Left cardiac atrium (tissue), 4 donors: ENCODE measurements at regions of chr9 and their contacts with region 1.

Region 1: GRCh38 chr9:72790989-72791388 is 161.9 kb downstream of the ALDH1A1 start:
- DNase-seq: no peak
- ATAC-seq: no peak

Region 2: DNA sequence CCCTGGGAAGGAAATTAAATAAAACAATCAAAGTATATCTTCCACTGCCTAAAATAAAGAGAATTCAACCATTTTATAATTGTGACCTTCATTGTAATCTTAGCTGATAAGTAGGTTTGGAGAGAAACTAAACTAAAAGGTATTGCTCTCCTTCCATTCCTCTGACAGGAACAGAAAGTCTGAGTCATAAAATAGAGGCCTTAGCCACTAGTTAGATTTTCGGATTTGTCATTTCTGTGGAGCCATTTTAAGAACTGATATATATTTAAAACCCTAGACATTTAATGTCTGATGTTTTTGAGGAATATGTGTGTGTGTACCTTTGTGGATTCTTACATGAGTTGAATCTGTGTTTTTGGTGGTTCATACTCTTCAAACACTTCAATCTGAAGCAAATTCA is 281.4 kb before region 1 on chr9:
- intact Hi-C with region 1: no loop called
- DNase-seq: no peak
- ATAC-seq: peak in 1 of 2 donors; percentile 35

Region 3: GRCh38 chr9:72817413-72817812 is 26.4 kb after region 1 on chr9:
- intact Hi-C with region 1: loop called in 1 of 2 experiments (anchors 2 kb)
- DNase-seq: no peak
- ATAC-seq: no peak

Region 4: DNA sequence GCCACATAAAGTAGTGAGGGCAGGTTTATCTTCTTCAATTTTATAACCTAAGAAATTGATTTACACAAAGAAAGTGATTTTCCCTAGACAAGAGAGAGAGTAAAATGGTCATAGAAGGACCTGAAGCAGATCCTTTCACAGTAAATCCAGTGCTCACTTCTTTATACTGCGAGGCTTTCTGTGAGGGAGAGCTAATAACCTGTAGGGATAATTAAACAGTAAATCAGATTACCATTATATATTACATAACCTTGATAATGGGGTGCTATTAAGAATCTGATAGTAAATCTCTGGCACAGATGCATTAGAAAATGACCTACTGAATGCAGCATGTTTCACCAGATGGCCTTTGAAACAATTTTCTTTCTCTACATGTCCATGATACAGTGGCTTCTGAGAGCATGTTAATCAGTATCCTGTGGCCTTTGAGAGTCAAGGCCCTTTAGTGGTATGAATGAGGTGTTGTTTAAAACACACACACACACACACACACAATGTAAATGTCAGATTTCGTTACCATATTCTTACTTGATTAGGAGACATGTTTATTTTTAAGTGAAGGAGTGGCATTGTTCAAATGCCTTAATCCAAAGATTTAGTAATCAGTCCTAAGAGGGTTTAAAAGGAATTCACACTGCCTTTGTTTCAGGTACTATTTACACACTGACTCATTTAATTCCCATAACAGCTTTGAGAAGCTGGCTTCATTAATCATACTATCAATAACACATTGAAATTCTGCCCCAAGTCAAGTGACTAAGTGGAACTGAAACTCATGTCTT is 37.2 kb after region 1 on chr9:
- intact Hi-C with region 1: no loop called
- DNase-seq: no peak
- ATAC-seq: no peak